Posterior vena cava (tissue), 2 donors: ENCODE measurements at regions of chr10 and their contacts with region 1.

Region 1: GRCh38 chr10:21584834-21585530 is 51.0 kb downstream of the MLLT10 start:
- DNase-seq: no peak

Region 2: DNA sequence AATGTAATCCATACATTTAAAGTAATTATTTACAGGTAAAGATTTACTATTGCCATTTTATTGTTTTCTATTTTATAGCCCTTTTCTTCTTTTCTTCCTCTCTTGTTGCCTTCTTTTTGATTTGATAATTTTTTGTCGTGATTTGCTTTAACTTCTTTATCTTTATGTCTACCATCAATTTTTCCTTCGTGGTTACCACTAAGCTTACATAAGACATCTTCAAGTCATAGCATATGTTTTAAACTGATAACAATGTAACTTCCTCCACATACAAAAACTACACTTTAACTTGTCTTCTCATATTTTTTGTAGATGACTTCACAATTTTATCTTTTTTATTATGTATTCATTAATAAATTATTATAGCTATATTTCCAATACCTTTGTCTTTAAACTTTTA is 1452.2 kb before region 1 on chr10:
- intact Hi-C with region 1: loop called in 1 of 2 experiments (anchors 5 kb)
- DNase-seq: no peak

Region 3: DNA sequence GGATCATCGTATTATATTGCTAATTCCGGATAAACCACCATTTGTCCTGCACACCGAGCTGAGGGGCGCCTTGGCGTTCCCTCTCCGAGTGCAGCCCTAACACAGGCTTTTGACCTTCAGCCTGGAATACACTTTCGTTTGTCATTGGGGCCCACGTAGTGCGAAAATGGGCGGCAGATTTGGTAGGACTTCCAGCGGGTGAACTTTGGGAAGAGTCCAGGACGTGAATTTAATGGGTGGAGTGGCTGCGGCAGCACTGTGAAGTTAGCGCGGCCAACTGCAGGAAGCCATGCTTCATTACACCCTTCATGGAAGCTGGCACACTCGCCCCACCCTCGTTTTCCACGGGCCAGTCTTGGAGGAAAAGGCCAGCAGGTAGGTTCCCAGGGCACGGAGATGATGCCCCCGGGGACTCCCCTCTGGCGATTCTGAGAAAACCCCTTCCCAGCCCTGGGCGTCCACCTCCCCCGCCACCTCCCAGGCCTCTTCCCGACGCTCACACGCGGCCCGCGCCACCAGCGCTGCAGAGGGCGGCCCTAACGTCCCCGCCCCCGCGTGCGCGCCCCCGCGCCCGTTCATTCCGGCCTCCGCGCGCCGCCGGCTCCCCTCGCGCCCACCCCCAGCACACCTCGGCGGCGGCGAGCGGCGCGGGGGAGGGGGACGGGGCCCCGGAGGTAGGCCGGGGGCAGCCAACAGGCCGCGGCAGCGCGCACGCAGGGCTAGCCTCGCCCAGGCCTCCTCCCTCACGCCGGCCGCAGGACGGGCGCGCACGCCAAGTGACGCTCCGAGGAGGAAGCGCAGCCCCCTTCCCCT is 51.3 kb before region 1 on chr10 and contains the start of gene MLLT10:
- intact Hi-C with region 1: no loop called
- DNase-seq: peak; percentile 98
- total RNA-seq, gene MLLT10: 31.5 to 34.0 TPM